Tibial artery (tissue), 4 donors: ENCODE measurements at regions of chr18 and their contacts with region 1.

Region 1: DNA sequence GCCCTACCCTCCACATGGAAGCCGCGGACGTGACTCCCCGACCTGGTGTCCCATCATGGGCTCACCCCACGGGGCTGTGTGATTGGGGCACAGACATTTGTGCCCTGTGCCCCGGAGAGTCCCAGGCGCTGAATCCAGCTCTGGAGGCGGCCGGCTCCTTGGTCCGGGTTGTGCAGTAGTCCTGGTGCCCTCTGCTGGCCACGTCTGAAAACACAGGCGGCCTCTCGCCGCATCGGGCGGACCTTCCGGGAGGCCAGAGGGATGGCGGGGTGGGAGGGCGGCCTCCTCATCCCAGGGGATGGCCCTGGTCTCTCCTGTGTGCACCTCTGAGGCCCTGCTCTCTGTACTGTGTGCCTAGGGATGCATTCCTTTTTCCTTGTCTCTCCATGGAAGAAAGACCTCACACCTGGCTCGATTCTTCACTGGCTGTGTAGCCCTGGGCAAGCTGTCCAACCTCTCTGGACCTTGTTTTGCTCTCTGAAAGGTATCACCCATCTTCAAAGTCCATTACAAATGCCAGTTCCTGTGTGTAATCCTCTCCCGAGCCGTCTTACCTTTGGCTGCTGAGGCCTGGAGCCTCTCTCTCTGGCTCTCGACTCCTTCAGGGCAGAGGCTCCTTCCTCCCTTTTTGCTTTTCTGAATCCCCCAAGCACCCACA is 27.6 kb downstream of the CELF4 start:
- DNase-seq: peak; percentile 68 to 78
- H3K4me3 ChIP-seq: no peak overlapping the region
- H3K27ac ChIP-seq: no peak overlapping the region
- H3K4me1 ChIP-seq: peaks cover 0 to 5% (median 0%) of the 10 kb centered on the region in 4 donors
- H3K27me3 ChIP-seq: peaks cover 0 to 81% of the 10 kb centered on the region in 2 donors
- CTCF ChIP-seq: peak; percentile 80 to 88

Region 2: GRCh38 chr18:37238282-37238955 is 299.6 kb before region 1 on chr18:
- intact Hi-C with region 1: no loop called
- DNase-seq: no peak
- H3K4me3 ChIP-seq: no peak overlapping the region
- H3K27ac ChIP-seq: no peak overlapping the region
- H3K4me1 ChIP-seq: peaks cover 0 to 4% (median 0%) of the 10 kb centered on the region in 4 donors
- H3K27me3 ChIP-seq: no peaks in the 10 kb centered on the region
- CTCF ChIP-seq: no peak

Region 3: DNA sequence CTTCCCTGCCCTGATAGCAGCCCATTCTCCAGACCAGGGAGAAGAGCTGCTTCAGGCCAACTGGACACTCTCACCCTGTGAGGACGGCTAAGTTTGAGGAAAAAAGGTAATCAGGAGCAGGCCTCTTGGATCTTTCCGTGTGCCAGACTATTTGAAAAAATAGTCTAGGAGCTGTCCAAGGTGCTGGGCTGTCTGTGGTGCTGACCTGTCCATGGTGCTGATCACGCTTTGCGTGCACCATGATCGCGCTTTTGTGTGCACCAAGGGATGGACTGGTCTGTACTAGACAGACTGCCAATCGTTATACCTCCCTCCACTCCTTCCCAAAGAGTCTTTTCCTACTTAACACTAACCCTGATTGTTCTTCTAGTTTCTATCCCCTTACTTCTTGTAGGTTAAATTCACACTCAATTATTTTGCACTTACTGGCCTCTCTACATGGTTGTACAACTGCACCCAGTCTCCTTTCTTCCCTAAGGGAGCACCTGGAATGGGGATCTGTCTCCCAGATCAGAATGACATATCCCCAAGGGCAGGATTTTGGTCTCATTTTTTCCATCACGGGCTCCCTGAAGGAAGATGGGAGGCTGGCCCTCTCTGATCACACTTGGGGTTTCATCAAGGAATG is 267.8 kb before region 1 on chr18:
- intact Hi-C with region 1: no loop called
- DNase-seq: no peak
- H3K4me3 ChIP-seq: no peak overlapping the region
- H3K27ac ChIP-seq: no peak overlapping the region
- H3K4me1 ChIP-seq: peaks cover 0 to 5% (median 0%) of the 10 kb centered on the region in 4 donors
- H3K27me3 ChIP-seq: peaks cover 0 to 44% of the 10 kb centered on the region in 2 donors
- CTCF ChIP-seq: no peak

Region 4: DNA sequence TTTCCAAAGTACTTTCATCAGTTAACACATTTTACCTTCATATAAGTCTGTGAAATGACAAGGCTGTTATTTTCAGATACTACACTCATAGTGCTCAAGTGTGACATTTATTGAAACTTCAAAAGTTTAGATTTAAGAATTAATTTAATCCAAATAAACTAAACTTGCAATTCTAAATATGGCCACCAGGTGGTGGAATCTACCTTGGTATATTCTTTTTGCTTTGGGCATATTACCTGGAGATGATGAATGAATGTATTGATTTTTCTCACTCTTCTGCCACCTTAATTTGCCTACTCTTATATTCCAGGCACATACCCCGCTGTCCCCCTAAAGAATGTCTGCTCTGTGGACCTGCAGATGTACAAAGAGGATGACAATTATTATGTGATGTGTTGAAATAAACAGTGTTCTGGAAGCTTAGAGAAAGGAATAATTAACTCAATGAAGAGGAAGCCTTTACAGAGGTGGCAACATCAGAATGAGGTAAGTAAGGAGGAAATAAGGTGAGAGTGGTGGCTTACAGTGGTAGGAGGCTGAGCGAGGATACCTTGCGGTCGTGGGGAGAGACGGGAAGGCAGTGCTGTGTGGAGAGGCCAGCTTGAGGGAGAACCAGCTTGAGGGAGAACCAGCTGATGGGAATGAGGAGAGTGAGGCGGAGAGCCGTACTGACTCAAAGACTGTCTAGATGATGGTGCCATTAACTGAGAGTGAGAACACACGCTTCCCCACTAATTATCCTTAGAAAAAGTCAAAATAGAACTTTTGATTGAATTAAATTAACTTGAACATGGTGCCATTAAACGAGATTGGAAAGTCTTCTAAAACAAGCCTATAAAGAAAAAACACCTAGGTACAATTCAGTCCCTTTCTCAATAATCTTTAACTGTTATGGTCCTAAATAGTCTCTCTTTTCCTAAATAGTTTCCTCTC is 151.9 kb before region 1 on chr18:
- intact Hi-C with region 1: loop called (anchors 5 kb)
- DNase-seq: no peak
- H3K4me3 ChIP-seq: no peak overlapping the region
- H3K27ac ChIP-seq: no peak overlapping the region
- H3K4me1 ChIP-seq: no peaks in the 10 kb centered on the region
- H3K27me3 ChIP-seq: peaks cover 0 to 17% of the 10 kb centered on the region in 2 donors
- CTCF ChIP-seq: peak; percentile 48 to 60

Region 5: DNA sequence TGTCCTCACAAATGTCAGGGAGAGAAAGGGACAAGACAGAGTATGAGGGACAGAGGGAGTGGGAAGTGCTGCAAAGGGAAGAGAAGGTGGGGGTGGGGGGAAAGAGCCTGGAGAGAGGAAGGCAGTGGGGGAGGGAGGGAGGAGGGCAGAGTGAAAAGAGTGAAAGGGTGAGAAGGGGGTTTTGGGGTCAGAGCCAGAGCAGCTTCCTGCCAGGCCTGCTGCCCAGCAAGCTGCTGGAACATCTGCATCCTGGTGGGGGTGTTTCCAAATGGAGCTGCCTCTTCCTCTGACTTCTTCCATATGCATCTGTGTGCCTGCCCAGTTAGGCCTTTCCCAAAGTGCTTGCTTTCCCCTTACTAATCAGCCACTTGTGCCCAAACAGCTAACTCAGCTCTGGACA is 121.9 kb after region 1 on chr18:
- intact Hi-C with region 1: no loop called
- DNase-seq: no peak
- H3K4me3 ChIP-seq: no peak overlapping the region
- H3K27ac ChIP-seq: no peak overlapping the region
- H3K4me1 ChIP-seq: no peaks in the 10 kb centered on the region
- H3K27me3 ChIP-seq: peaks cover 0 to 3% of the 10 kb centered on the region in 2 donors
- CTCF ChIP-seq: no peak